ENCODE measurements at regions of chr2 and their contacts with region 1.

Region 1: GRCh38 chr2:236642584-236643291 is 73.1 kb downstream of the ACKR3 start:
- DNase-seq: peak; percentile 95 to 96
- ATAC-seq: peak; percentile 95
- H3K4me3 ChIP-seq: no peak overlapping the region
- H3K27ac ChIP-seq: peak overlapping the region; percentile 34 to 96
- H3K4me1 ChIP-seq: no peaks in the 10 kb centered on the region
- H3K27me3 ChIP-seq: no peaks in the 10 kb centered on the region

Region 2: DNA sequence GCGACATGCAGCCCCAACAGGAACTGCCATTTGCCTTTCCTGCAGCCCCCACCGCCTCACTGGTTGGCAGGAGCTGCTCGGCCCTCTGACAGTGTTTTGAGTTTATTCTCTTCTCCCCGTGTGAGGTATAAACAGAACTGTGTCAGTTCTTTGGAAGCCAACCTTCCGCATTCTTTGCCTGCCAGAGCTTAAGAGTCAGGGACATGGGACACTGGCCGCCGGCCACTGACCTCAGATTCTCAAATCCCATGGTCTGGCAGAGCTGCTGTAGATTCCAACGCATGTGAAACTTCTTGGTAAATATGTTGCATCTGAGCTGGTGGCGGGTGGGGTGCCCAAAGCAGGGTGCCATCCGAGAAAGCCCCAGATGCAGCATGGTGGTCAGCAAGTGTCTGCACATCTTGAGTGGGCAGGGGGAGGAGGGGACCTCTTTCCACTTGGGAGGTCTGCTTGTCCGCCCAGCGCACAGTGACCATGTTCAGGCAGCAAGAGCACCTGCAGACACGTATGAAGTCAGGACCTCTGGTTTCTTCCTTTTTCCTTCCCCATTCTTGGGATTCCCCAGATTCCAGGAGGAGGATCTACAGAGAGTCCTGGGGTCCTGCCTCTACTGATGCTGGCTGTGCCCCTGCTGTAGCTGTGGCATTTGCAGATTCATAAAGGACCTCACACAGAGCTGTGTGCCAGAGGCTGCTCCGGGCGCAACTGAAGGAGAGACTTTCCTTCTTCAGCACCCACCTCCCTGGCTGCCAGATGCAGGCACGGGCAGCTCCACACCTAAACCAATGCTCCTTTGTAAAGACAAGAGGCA is 402.3 kb before region 1 on chr2:
- intact Hi-C with region 1: no loop called
- DNase-seq: no peak
- ATAC-seq: no peak
- H3K4me3 ChIP-seq: no peak overlapping the region
- H3K27ac ChIP-seq: no peak overlapping the region
- H3K4me1 ChIP-seq: no peaks in the 10 kb centered on the region
- H3K27me3 ChIP-seq: no peaks in the 10 kb centered on the region

Region 3: GRCh38 chr2:236607451-236608187 is 35.1 kb before region 1 on chr2:
- intact Hi-C with region 1: no loop called
- DNase-seq: no peak
- ATAC-seq: no peak
- H3K4me3 ChIP-seq: no peak overlapping the region
- H3K27ac ChIP-seq: no peak overlapping the region
- H3K4me1 ChIP-seq: no peaks in the 10 kb centered on the region
- H3K27me3 ChIP-seq: no peaks in the 10 kb centered on the region

Region 4: GRCh38 chr2:236675051-236675450 is 32.3 kb after region 1 on chr2:
- intact Hi-C with region 1: loop called in 1 of 2 experiments (anchors 1 kb)
- DNase-seq: no peak
- ATAC-seq: no peak
- H3K4me3 ChIP-seq: no peak overlapping the region
- H3K27ac ChIP-seq: no peak overlapping the region
- H3K4me1 ChIP-seq: peaks cover 4 to 8% of the 10 kb centered on the region in 2 donors
- H3K27me3 ChIP-seq: no peaks in the 10 kb centered on the region

Region 5: DNA sequence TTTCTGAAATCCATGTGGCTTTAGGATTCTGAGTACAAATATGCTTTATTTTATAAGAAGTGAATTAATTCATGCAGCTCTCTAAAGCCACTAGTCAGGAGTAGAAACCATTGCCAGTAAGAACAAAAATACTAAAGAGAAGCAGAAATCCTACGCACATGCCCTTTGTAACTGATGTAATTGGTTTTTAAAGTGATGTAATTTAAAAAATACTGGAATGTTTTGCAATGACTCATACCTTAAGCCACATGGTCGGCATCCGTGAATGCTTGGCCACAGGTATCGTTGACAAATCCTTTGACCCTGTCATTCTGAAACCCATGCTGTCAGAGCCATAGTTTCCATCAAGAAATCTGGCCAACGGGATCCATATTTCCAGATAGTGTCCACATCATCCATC is 140.2 kb after region 1 on chr2:
- intact Hi-C with region 1: loop called (anchors 5 kb)
- DNase-seq: no peak
- ATAC-seq: no peak
- H3K4me3 ChIP-seq: no peak overlapping the region
- H3K27ac ChIP-seq: no peak overlapping the region
- H3K4me1 ChIP-seq: no peaks in the 10 kb centered on the region
- H3K27me3 ChIP-seq: no peaks in the 10 kb centered on the region

Region 6: DNA sequence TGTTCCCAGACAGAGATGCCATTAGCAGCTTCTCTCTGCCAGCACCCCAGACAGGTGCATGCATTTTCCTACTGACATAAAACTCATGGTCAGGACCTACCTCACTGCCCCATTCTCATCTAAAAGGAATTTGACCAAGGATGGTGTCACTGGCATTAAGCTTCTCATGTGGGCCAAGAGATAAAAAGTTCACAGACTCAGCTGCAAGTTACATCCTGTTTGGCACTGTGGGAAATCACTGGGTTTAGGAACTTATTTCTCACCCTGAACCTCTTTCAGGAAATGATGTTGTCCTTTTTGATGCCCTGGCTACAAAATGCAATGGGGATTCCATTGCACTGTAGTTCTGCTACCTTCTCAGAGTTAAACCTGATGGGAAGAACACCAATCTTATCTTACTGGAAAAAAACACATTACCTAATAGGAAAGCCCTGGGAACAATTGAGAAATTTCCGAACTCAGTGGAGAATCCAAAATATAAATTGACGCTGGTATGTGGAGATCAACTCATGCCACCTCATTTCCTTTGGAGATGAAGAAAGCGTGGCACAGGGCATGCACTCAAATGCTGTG is 190.8 kb after region 1 on chr2:
- intact Hi-C with region 1: loop called in 1 of 2 experiments (anchors 5 kb)
- DNase-seq: no peak
- ATAC-seq: no peak
- H3K4me3 ChIP-seq: no peak overlapping the region
- H3K27ac ChIP-seq: no peak overlapping the region
- H3K4me1 ChIP-seq: peaks cover 0 to 3% of the 10 kb centered on the region in 2 donors
- H3K27me3 ChIP-seq: no peaks in the 10 kb centered on the region

Region 7: GRCh38 chr2:237026981-237027711 is 384.4 kb after region 1 on chr2:
- intact Hi-C with region 1: loop called in 1 of 2 experiments (anchors 10 kb)
- DNase-seq: peak; percentile 80 to 88
- ATAC-seq: peak; percentile 86
- H3K4me3 ChIP-seq: no peak overlapping the region
- H3K27ac ChIP-seq: no peak overlapping the region
- H3K4me1 ChIP-seq: no peaks in the 10 kb centered on the region
- H3K27me3 ChIP-seq: no peaks in the 10 kb centered on the region

Measured in aorta (tissue), 5 donors.